CD8-positive, alpha-beta T cell (primary cell): ENCODE measurements at regions of chr1 and their contacts with region 1.

Region 1: GRCh38 chr1:12208764-12209494 is 20.9 kb upstream of the VPS13D start:
- DNase-seq: peak; percentile 78 to 94 (median 86)
- ATAC-seq: peak; percentile 72
- H3K4me3 ChIP-seq: no peak overlapping the region
- H3K4me3 Mint-ChIP-seq: peak overlapping the region; percentile 35
- H3K27ac ChIP-seq: peak overlapping the region in 1 of 2 experiments; percentile 58
- H3K27ac Mint-ChIP-seq: peak overlapping the region; percentile 76
- H3K4me1 ChIP-seq: peaks cover 41% of the 10 kb centered on the region
- H3K4me1 Mint-ChIP-seq: peaks cover 54% of the 10 kb centered on the region
- H3K27me3 ChIP-seq: no peaks in the 10 kb centered on the region
- H3K27me3 Mint-ChIP-seq: no peaks in the 10 kb centered on the region
- CTCF ChIP-seq: peak; percentile 93

Region 2: DNA sequence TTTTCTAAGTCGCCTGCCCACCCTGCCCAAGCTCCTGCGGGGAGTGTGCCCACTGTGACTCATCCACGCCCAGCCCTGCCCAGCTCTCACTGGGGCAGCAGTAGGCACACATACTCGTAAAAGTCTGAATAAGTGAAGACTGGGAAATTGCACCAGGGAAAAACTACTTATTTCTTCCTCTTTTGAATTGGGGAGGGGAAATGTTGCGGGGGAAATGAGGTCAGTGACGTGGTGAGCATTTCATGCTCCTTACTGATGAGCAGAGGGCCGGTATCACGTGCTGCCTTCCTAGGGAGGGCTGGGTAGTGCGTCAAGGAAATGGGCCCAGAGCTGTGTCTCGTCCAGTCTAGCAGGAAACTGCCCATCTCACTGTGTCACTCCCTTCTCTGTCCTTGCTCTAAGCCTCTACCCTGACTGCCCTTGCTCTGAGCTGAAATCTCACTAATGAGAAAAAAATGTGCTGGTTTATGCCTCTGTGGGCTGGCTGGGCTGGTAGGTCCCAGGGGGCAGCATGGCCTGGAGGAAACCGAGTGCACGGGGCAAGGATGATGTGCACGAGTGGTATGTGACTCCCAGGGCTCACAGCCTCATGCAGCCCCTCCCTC is 55.6 kb before region 1 on chr1:
- CTCF ChIA-PET with region 1: interaction called, 35 read pairs
- POLR2A ChIA-PET with region 1: interaction called, 12 read pairs
- intact Hi-C with region 1: no loop called
- DNase-seq: peak in 3 of 9 experiments; percentile 47 to 81 (median 66)
- ATAC-seq: no peak
- H3K4me3 ChIP-seq: no peak overlapping the region
- H3K4me3 Mint-ChIP-seq: peak overlapping the region; percentile 8
- H3K27ac ChIP-seq: peak overlapping the region in 1 of 2 experiments; percentile 89
- H3K27ac Mint-ChIP-seq: peak overlapping the region; percentile 80
- H3K4me1 ChIP-seq: peaks cover 69% of the 10 kb centered on the region
- H3K4me1 Mint-ChIP-seq: peaks cover 76% of the 10 kb centered on the region
- H3K27me3 ChIP-seq: no peaks in the 10 kb centered on the region
- H3K27me3 Mint-ChIP-seq: no peaks in the 10 kb centered on the region
- CTCF ChIP-seq: no peak

Region 3: DNA sequence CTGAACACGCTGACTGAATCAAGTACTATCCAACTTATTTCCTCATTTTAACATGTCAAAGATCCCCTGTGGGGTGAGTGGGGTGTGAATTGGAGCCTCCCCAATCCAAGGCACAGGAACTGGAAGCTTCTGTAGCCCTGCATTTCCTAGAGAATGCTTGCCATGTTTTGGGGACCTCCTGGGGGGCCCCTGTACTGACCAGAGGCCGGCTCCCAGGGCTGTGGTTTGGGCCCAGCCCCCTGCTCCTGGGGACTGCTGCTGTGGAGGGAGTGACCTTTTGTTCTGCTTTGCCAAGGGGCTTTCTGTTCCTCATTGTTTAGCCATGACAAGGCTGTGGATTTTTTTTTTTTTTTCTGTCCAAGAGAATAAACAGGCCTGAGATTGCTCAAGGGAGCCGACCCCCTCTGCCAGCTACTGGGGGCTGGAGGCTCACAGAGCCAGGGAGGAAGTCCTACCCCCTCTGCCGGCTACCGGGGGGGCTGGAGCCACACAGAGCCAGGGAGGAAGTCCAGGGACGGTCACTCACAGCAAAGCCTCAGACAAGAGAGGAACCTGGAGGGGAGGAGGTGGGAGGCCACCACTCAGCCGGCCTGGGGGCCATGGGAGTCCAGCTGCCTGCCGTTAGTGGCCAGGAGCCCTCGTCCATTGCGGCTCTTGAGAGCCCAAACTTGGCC is 24.8 kb before region 1 on chr1:
- CTCF ChIA-PET with region 1: interaction called, 16 read pairs
- POLR2A ChIA-PET with region 1: interaction called, 4 read pairs
- intact Hi-C with region 1: loop called in 1 of 2 experiments (anchors 2 kb)
- DNase-seq: peak in 1 of 9 experiments; percentile 47
- ATAC-seq: no peak
- H3K4me3 ChIP-seq: no peak overlapping the region
- H3K4me3 Mint-ChIP-seq: no peak overlapping the region
- H3K27ac ChIP-seq: peak overlapping the region in 1 of 2 experiments; percentile 60
- H3K27ac Mint-ChIP-seq: peak overlapping the region; percentile 27
- H3K4me1 ChIP-seq: peaks cover 22% of the 10 kb centered on the region
- H3K4me1 Mint-ChIP-seq: peaks cover 47% of the 10 kb centered on the region
- H3K27me3 ChIP-seq: no peaks in the 10 kb centered on the region
- H3K27me3 Mint-ChIP-seq: no peaks in the 10 kb centered on the region
- CTCF ChIP-seq: no peak

Region 4: DNA sequence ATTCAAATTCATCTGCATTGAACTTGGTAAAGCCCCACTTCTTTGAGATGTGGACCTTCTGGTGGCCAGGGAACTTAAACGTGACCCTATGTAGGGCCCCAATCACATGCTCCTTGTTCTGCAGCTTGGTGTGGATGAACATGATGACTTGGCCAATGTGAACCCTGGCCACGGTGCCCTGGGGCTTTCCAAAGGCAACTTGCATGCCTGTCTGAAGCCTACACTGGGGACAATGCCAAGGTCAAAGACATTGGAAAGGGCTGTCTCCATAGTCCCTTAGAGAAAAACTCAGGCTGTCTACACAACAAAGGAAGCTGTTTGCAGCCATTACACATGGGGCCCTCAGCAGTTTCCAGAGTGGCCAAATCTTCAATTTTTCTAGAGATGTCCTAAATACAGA is 12.0 kb after region 1 on chr1:
- CTCF ChIA-PET with region 1: interaction called, 36 read pairs
- POLR2A ChIA-PET with region 1: interaction called, 5 read pairs
- intact Hi-C with region 1: no loop called
- DNase-seq: no peak
- ATAC-seq: no peak
- H3K4me3 ChIP-seq: no peak overlapping the region
- H3K4me3 Mint-ChIP-seq: no peak overlapping the region
- H3K27ac ChIP-seq: no peak overlapping the region
- H3K27ac Mint-ChIP-seq: no peak overlapping the region
- H3K4me1 ChIP-seq: no peaks in the 10 kb centered on the region
- H3K4me1 Mint-ChIP-seq: no peaks in the 10 kb centered on the region
- H3K27me3 ChIP-seq: no peaks in the 10 kb centered on the region
- H3K27me3 Mint-ChIP-seq: no peaks in the 10 kb centered on the region
- CTCF ChIP-seq: no peak

Region 5: GRCh38 chr1:12532438-12533315 is 323.7 kb after region 1 on chr1:
- CTCF ChIA-PET with region 1: no interaction called
- POLR2A ChIA-PET with region 1: no interaction called
- intact Hi-C with region 1: no loop called
- DNase-seq: no peak
- ATAC-seq: no peak
- H3K4me3 ChIP-seq: no peak overlapping the region
- H3K4me3 Mint-ChIP-seq: no peak overlapping the region
- H3K27ac ChIP-seq: no peak overlapping the region
- H3K27ac Mint-ChIP-seq: no peak overlapping the region
- H3K4me1 ChIP-seq: no peaks in the 10 kb centered on the region
- H3K4me1 Mint-ChIP-seq: peaks cover 6% of the 10 kb centered on the region
- H3K27me3 ChIP-seq: no peaks in the 10 kb centered on the region
- H3K27me3 Mint-ChIP-seq: no peaks in the 10 kb centered on the region
- CTCF ChIP-seq: no peak

Region 6: GRCh38 chr1:12658531-12659453 is 449.9 kb after region 1 on chr1:
- CTCF ChIA-PET with region 1: no interaction called
- POLR2A ChIA-PET with region 1: no interaction called
- intact Hi-C with region 1: loop called in 1 of 2 experiments (anchors 5 kb)
- DNase-seq: peak; percentile 43 to 83 (median 76)
- ATAC-seq: peak; percentile 82
- H3K4me3 ChIP-seq: no peak overlapping the region
- H3K4me3 Mint-ChIP-seq: no peak overlapping the region
- H3K27ac ChIP-seq: no peak overlapping the region
- H3K27ac Mint-ChIP-seq: no peak overlapping the region
- H3K4me1 ChIP-seq: no peaks in the 10 kb centered on the region
- H3K4me1 Mint-ChIP-seq: peaks cover 5% of the 10 kb centered on the region
- H3K27me3 ChIP-seq: peaks cover 0 to 5% of the 10 kb centered on the region in 2 experiments
- H3K27me3 Mint-ChIP-seq: peaks cover 5% of the 10 kb centered on the region
- CTCF ChIP-seq: peak; percentile 98

Region 7: DNA sequence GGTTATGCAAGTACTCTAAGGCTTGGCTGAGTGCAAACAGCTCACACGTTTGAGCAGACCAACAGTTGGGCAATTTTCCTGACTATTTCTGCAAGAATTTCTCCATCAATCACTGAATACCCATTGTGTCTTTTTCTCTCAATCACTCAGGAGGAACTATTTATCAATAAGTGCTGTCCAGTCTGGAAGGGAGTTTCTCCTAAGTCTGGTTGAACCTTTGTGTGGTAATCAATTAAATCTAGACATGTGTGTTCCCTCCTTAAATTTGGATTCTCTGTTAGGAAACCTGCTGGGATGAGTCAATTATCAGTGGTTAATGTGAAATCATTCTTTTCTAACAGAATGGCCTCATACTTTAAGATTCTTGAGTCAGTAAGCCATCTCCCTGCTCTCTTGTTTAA is 500.2 kb after region 1 on chr1:
- CTCF ChIA-PET with region 1: no interaction called
- POLR2A ChIA-PET with region 1: no interaction called
- intact Hi-C with region 1: no loop called
- DNase-seq: no peak
- ATAC-seq: no peak
- H3K4me3 ChIP-seq: no peak overlapping the region
- H3K4me3 Mint-ChIP-seq: no peak overlapping the region
- H3K27ac ChIP-seq: no peak overlapping the region
- H3K27ac Mint-ChIP-seq: no peak overlapping the region
- H3K4me1 ChIP-seq: no peaks in the 10 kb centered on the region
- H3K4me1 Mint-ChIP-seq: no peaks in the 10 kb centered on the region
- H3K27me3 ChIP-seq: peaks cover 0 to 4% of the 10 kb centered on the region in 2 experiments
- H3K27me3 Mint-ChIP-seq: peaks cover 27% of the 10 kb centered on the region
- CTCF ChIP-seq: no peak